Activated CD4-positive, alpha-beta T cell treated with anti-CD3 and anti-CD28 coated beads, Interleukin-2, amount 10 ng/mL, durations not matched to agents 24 days and 14 days (primary cell): ENCODE measurements at regions of chr9 and their contacts with region 1.

Region 1: GRCh38 chr9:89428901-89429890 is 68.7 kb downstream of the SEMA4D start:
- DNase-seq: peak; percentile 84
- H3K4me3 Mint-ChIP-seq: peak overlapping the region; percentile 26
- H3K27ac Mint-ChIP-seq: peak overlapping the region; percentile 86
- H3K4me1 Mint-ChIP-seq: peaks cover 72% of the 10 kb centered on the region
- H3K27me3 Mint-ChIP-seq: no peaks in the 10 kb centered on the region

Region 2: DNA sequence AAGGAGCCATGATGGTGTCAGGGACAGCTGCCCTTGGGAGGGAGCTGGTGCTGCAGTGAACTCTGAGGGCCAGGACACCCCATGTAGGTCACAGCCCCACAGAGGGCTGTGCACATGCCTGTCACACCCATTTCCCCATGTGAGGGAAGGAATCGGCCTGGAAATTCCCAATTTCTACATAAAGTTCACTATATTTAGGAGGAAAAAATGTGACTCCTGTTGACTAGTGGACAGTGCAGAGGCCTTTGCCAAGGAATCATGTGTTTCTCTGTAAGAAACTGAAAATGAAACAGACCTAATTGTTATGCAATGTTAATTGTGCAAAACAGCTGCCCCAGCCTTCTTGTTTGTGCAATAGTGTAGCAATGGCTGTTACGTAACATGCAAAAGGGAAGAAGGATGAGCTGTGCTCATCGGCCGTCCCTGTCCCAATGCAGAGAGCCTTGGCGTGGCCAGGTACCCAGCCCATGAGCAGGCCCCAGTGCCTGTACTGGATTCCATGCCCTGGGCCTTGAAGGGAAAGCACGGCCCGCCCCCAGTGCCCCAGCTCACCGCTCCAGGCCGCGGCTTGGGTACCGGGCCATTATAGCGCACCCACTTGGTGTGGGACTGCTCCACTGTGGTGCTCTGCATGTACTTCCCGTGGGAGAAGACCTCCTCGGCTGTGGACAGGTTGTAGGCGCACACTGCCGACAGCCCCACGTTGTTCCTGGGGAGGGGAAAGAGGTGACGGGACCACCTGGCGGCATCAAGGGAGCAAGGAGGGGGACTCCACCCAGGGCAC is 40.9 kb before region 1 on chr9:
- intact Hi-C with region 1: no loop called
- DNase-seq: no peak
- H3K4me3 Mint-ChIP-seq: no peak overlapping the region
- H3K27ac Mint-ChIP-seq: peak overlapping the region; percentile 37
- H3K4me1 Mint-ChIP-seq: peaks cover 11% of the 10 kb centered on the region
- H3K27me3 Mint-ChIP-seq: no peaks in the 10 kb centered on the region

Region 3: DNA sequence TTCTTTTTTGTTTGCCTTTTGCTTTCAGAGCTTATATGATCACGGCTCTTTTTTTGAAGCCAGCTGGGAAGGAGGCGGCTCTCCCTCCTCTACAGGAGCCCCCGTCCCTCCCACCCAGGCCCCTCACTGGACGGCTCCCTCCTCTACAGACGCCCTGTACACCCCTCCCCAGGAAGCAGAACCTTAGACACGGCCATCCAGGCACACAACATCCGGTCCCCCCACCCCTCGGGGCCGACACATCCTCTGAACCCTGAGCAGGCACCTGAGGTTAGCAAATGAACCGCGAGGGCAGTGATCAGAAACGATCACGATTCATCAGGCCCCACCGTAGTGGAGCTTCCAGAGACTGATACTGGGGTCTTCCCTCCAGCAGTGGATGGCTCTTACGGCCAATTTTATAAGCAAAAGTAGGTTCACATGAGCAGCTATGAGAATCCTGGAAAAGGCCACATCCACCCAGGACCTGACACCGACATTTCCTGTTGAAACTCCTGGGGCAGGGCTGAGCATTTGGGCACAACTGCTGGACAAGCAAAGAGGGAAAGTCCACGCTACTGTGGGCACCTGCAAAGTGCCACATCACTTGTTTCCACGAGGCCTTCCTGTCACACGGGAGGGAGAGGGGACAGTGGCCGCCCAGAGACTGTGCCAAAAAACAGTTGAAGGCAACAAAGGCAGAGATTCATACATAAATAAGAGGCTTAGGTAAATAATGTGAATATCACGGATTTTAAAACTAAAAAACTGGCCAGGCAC is 10.1 kb before region 1 on chr9:
- intact Hi-C with region 1: loop called (anchors 1 kb)
- DNase-seq: peak; percentile 92
- H3K4me3 Mint-ChIP-seq: peak overlapping the region; percentile 93
- H3K27ac Mint-ChIP-seq: peak overlapping the region; percentile 86
- H3K4me1 Mint-ChIP-seq: peaks cover 82% of the 10 kb centered on the region
- H3K27me3 Mint-ChIP-seq: no peaks in the 10 kb centered on the region